ENCODE measurements at regions of chr2 and their contacts with region 1.

Region 1: GRCh38 chr2:177332041-177332991 is 60.3 kb upstream of the AGPS start:
- DNase-seq: peak; percentile 59
- ATAC-seq: peak; percentile 90
- H3K4me3 Mint-ChIP-seq: no peak overlapping the region
- H3K27ac Mint-ChIP-seq: no peak overlapping the region
- H3K4me1 Mint-ChIP-seq: peaks cover 17% of the 10 kb centered on the region
- H3K27me3 Mint-ChIP-seq: no peaks in the 10 kb centered on the region

Region 2: DNA sequence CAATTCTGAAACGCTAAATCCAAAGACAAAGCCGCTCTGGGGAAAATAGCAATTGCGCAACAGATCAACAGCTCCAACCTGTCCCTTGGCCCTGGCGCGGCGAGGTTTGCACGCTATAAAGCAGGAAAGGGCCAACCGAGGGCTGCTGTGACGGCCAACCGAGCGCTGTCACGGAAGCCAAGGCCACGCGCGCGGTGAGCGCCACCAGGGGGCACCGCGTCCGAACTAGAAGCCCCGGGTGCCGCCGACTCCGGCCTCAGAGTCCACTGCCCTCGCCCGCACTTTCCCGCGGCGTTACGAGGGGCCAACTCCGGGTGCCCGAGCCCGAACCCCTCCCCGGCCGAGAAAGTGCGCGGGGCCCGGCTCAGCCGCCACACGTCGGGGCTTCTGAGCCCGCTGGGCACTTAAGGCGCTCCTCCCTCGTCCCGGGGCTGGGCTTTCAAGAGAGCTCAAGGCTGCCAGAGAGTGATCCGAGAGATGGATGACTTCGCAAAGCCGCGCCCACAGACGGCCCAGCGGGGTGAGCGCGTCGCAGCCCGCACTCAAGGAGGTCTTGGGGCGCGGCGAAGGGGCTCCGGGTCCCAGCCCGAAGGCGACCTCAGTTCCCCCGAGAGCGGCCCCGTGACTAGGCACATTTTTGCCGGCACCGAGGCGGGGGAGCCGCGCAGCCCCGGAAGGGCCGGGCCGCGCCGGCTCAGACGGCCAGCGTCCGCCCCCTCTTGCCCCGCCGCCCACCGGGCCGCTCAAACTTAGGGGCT is 68.7 kb before region 1 on chr2:
- CTCF ChIA-PET with region 1: interaction called, 7 read pairs
- POLR2A ChIA-PET with region 1: interaction called, 4 read pairs
- intact Hi-C with region 1: loop called (anchors 1 kb)
- DNase-seq: peak; percentile 96
- ATAC-seq: peak; percentile 69
- H3K4me3 Mint-ChIP-seq: peak overlapping the region; percentile 91
- H3K27ac Mint-ChIP-seq: peak overlapping the region; percentile 98
- H3K4me1 Mint-ChIP-seq: peaks cover 53% of the 10 kb centered on the region
- H3K27me3 Mint-ChIP-seq: no peaks in the 10 kb centered on the region

Region 3: DNA sequence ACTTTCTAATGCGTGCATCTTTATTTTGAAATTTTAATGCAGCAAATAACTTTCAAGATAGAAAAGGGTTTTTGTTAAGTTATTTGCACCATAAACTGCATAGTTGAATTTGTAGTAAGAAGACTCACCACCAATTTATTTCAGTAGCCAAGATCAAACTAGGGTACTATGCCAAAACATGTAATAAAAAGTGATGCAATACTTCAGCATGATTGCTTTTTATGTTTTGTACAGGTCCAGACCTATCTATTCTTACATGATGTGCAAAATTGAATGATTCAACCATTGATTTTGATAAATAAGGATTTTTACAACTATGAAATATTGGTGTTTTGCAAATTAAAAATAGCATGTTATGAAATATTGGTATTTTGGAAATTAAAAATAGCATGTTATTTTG is 87.0 kb after region 1 on chr2:
- CTCF ChIA-PET with region 1: interaction called, 153 read pairs
- POLR2A ChIA-PET with region 1: interaction called, 4 read pairs
- intact Hi-C with region 1: loop called (anchors 1 kb)
- DNase-seq: no peak
- ATAC-seq: no peak
- H3K4me3 Mint-ChIP-seq: no peak overlapping the region
- H3K27ac Mint-ChIP-seq: peak overlapping the region; percentile 80
- H3K4me1 Mint-ChIP-seq: peaks cover 34% of the 10 kb centered on the region
- H3K27me3 Mint-ChIP-seq: no peaks in the 10 kb centered on the region

Region 4: DNA sequence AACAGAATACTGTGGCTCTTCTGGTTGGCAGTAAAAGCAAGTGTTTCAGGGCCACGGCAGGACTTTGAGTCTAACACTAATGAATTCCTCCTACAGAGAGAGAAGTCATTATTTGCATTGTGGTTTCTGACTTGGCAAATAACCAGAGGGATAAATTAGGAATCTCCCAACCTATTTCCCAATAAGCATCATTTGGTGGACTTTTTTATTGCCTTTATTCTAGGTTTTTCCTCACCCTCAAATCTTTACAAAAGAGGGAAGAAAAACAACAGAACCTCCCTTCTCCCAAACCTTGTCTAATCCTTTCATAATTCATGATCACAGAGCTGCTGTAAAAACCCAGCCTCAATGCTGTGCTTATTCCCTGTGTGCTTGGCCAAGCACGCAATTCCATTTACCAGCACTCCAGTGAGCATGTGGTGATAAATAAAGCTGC is 239.9 kb after region 1 on chr2:
- CTCF ChIA-PET with region 1: no interaction called
- POLR2A ChIA-PET with region 1: no interaction called
- intact Hi-C with region 1: no loop called
- DNase-seq: no peak
- ATAC-seq: no peak
- H3K4me3 Mint-ChIP-seq: no peak overlapping the region
- H3K27ac Mint-ChIP-seq: no peak overlapping the region
- H3K4me1 Mint-ChIP-seq: no peaks in the 10 kb centered on the region
- H3K27me3 Mint-ChIP-seq: no peaks in the 10 kb centered on the region

Region 5: DNA sequence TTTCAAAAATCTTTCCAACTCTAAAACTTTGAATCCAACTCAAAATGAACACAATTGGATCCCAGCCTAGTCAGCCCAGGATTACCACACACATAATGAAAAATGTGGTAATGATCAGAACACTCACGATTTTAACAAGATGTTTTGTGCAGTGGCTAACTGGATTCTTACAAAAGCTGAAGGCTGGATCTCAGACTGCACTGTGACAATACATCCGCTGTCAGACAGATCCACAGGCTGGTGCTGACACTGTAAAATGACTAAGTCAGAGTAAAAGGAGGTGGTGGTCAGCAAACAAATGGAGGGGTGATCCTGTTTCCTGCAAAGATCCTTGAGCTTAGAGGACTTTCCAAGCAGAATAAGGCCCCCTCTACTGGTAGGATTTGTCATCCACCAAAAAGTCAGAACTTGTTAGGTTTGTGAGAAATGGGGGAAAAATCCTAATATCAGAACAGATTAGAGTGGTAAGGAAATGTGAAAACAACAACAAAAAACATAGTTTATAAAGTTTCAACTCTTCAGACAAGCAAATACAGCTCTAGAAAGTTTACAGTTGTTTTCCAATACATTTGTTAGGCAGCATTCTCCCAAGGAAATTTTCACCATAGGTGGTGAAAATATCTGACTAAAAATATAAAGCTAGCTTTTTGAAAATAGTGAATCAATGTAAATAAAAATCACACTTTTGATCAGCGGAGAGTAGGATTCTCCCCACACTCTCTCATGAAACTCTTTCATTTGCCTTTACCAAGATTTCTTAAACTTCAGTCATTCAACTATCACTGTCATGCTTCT is 272.2 kb after region 1 on chr2:
- CTCF ChIA-PET with region 1: interaction called, 5 read pairs
- POLR2A ChIA-PET with region 1: no interaction called
- intact Hi-C with region 1: loop called (anchors 1 to 2 kb)
- DNase-seq: no peak
- ATAC-seq: peak; percentile 23
- H3K4me3 Mint-ChIP-seq: no peak overlapping the region
- H3K27ac Mint-ChIP-seq: no peak overlapping the region
- H3K4me1 Mint-ChIP-seq: no peaks in the 10 kb centered on the region
- H3K27me3 Mint-ChIP-seq: peaks cover 2% of the 10 kb centered on the region

Region 6: GRCh38 chr2:177724398-177725287 is 392.3 kb after region 1 on chr2:
- CTCF ChIA-PET with region 1: interaction called, 42 read pairs
- POLR2A ChIA-PET with region 1: no interaction called
- intact Hi-C with region 1: loop called (anchors 1 kb)
- DNase-seq: peak; percentile 72
- ATAC-seq: peak; percentile 64
- H3K4me3 Mint-ChIP-seq: no peak overlapping the region
- H3K27ac Mint-ChIP-seq: no peak overlapping the region
- H3K4me1 Mint-ChIP-seq: peaks cover 2% of the 10 kb centered on the region
- H3K27me3 Mint-ChIP-seq: peaks cover 16% of the 10 kb centered on the region